Posterior cingulate gyrus (tissue), 11 donors: ENCODE measurements at regions of chr1 and their contacts with region 1.

Region 1: DNA sequence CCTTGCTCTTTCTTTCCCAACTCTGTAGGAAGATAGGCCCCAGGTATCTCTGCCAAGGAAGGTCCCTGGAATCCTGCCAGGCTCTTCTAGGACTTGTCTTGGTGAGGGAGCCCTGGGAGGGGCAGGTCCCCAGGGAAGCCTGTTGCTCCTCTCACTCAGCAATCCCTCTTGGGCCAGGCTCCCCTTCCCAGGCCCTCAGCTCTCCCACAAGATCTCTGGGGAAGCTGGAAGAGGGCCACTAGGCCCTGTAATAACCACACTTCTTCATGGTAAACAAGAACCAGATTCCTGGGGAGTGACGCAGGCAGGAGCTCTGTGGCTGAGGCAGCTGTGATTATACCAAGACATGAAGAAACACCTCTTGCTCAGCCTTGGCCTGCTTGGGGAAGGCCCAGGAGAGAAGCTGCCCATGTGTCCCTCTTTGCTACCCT is 9.9 kb upstream of the MAPKAPK2 start:
- DNase-seq: no peak

Region 2: GRCh38 chr1:206524739-206525369 is 149.9 kb before region 1 on chr1:
- intact Hi-C with region 1: no loop called
- DNase-seq: no peak

Region 3: GRCh38 chr1:206612129-206612876 is 62.5 kb before region 1 on chr1 and contains the start of gene EIF2D:
- intact Hi-C with region 1: loop called (anchors 5 kb)
- DNase-seq: peak; percentile 89 to 99 (median 94)